Panc1 (cell line): ENCODE measurements at regions of chr16 and their contacts with region 1.

Region 1: DNA sequence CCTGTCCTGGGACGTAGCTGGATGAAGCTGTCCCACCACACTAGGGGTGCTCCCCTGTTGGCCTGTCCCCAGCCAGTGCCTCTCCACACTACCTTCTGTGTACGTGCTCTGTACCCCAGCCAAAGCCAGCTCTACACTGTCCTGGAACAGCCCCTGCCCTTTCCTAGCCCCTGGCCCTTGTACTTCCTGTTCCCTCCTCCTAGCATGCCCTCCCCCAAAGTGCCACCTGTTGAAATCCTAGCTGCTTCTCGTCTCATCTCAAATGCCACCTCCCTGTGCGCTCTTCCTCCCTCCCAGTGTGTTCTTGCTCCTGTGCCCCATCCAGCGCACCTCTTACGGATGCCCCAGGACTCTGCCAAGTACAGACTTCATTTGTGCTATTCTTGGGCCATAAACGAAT is 33.5 kb downstream of the IRX3 start:
- DNase-seq: no peak
- ATAC-seq: no peak
- H3K4me3 ChIP-seq: no peak overlapping the region
- H3K27ac ChIP-seq: no peak overlapping the region
- H3K4me1 ChIP-seq: no peaks in the 10 kb centered on the region
- H3K27me3 ChIP-seq: no peaks in the 10 kb centered on the region
- CTCF ChIP-seq: no peak

Region 2: DNA sequence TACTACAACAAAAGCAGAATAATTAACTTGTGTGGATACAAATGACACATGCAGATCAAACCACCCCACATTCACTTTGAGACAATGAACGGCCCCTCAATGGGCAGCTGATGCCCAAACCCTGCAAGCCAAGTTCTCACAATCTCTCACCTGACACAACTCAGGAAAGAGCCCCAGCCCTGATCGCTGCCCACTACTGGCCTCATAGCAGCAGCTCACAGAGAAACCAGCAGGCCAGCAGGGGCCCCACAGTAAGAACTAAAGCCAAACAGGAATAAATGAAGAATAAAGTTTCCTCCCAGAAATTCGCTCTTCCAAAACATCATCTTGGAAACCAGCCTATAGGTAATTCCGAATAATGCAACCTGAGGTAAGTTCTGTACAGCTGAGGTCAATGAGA is 757.8 kb before region 1 on chr16:
- CTCF ChIA-PET with region 1: interaction called, 19 read pairs
- POLR2A ChIA-PET with region 1: no interaction called
- in situ Hi-C with region 1: no loop called
- intact Hi-C with region 1: no loop called
- DNase-seq: no peak
- ATAC-seq: no peak
- H3K4me3 ChIP-seq: no peak overlapping the region
- H3K27ac ChIP-seq: no peak overlapping the region
- H3K4me1 ChIP-seq: no peaks in the 10 kb centered on the region
- H3K27me3 ChIP-seq: no peaks in the 10 kb centered on the region
- CTCF ChIP-seq: 0 out of 2 replicates have a peak, but pooled peaks have one; percentile 15